ENCODE measurements at regions of chr20 and their contacts with region 1.

Region 1: GRCh38 chr20:51220293-51220706 is 197.4 kb upstream of the KCNG1 start:
- DNase-seq: peak in 7 of 9 donors; percentile 7 to 67 (median 33)
- ATAC-seq: peak; percentile 61
- H3K4me3 ChIP-seq: no peak overlapping the region
- H3K4me3 Mint-ChIP-seq: no peak overlapping the region
- H3K27ac ChIP-seq: no peak overlapping the region
- H3K27ac Mint-ChIP-seq: no peak overlapping the region
- H3K4me1 ChIP-seq: no peaks in the 10 kb centered on the region
- H3K4me1 Mint-ChIP-seq: peaks cover 6 to 23% (median 11%) of the 10 kb centered on the region in 7 donors
- H3K27me3 ChIP-seq: no peaks in the 10 kb centered on the region
- H3K27me3 Mint-ChIP-seq: peaks cover 36 to 73% (median 65%) of the 10 kb centered on the region in 5 donors

Region 2: GRCh38 chr20:51306503-51307358 is 86.4 kb after region 1 on chr20:
- CTCF ChIA-PET with region 1: no interaction called
- POLR2A ChIA-PET with region 1: no interaction called
- intact Hi-C with region 1: loop called in 1 of 2 experiments (anchors 2 kb)
- DNase-seq: peak; percentile 39 to 74 (median 53)
- ATAC-seq: peak; percentile 87
- H3K4me3 ChIP-seq: no peak overlapping the region
- H3K4me3 Mint-ChIP-seq: no peak overlapping the region
- H3K27ac ChIP-seq: no peak overlapping the region
- H3K27ac Mint-ChIP-seq: no peak overlapping the region
- H3K4me1 ChIP-seq: peaks cover 0 to 4% of the 10 kb centered on the region in 2 donors
- H3K4me1 Mint-ChIP-seq: peaks cover 0 to 5% (median 0%) of the 10 kb centered on the region in 7 donors
- H3K27me3 ChIP-seq: no peaks in the 10 kb centered on the region
- H3K27me3 Mint-ChIP-seq: peaks cover 8 to 25% (median 21%) of the 10 kb centered on the region in 5 donors

Measured in naive thymus-derived CD4-positive, alpha-beta T cell (primary cell).